ENCODE measurements at regions of chr1 and their contacts with region 1.

Region 1: GRCh38 chr1:183218971-183219615 is 33.0 kb downstream of the LAMC2 start:
- DNase-seq: no peak
- ATAC-seq: peak; percentile 81

Region 2: DNA sequence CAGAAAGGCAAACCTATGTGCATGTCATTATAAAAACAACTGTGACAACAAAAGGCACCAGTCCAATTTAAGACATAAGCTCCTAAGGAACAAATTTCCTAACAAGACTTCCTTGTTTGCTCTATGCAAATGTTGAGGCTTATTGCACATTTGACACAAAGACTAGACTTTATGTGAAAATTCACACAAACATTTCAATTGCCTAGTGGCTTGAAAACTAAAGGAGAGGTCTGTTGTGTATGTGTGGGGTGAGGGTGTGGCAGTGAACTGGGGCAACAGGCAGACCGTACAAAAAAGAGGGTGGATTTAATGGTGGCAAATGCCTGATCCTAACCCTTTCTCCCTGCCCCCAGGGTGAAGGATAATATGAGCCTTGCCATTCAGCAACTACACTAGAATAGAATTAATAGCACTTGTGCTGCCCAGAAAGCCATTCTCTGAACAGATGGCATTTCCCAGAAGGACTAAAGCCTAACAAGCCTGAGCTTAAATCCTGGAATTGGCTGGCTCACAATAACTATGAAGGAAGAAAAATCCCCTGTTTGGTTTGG is 901.4 kb before region 1 on chr1:
- intact Hi-C with region 1: no loop called
- DNase-seq: no peak
- ATAC-seq: peak; percentile 32

Region 3: GRCh38 chr1:182839209-182840065 is 379.7 kb before region 1 on chr1 and contains the start of gene DHX9:
- intact Hi-C with region 1: no loop called
- DNase-seq: peak; percentile 97
- ATAC-seq: peak; percentile 95
- total RNA-seq, gene DHX9: 127 TPM

Region 4: DNA sequence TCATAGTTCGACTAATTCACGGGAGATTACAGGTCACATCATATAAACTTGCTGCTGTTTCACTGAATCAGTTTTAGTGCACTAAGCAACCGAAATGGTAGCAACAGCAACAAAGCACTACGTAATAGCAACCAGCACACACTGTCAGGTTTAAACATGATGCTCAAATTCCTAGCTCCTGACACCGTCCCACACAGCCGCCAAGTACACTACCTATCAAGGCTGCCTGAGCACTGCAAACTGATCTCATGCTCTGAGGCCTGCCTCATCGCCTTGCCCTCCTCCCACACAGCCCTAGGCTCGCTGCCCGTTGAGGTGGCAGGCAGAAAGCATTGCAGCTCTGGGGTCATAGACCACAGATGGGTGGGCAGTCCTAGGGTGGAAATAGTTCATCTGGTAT is 20.6 kb before region 1 on chr1:
- intact Hi-C with region 1: no loop called
- DNase-seq: no peak
- ATAC-seq: no peak

Region 5: GRCh38 chr1:183306317-183307042 is 87.4 kb after region 1 on chr1:
- intact Hi-C with region 1: no loop called
- DNase-seq: no peak
- ATAC-seq: peak; percentile 74

Region 6: GRCh38 chr1:184684285-184685074 is 1465.4 kb after region 1 on chr1:
- intact Hi-C with region 1: loop called (anchors 5 kb)
- DNase-seq: peak; percentile 60
- ATAC-seq: peak; percentile 94